IMR-90 (cell line): ENCODE measurements at regions of chr13 and their contacts with region 1.

Region 1: GRCh38 chr13:48709213-48709612 is 55.5 kb downstream of the CYSLTR2 start:
- DNase-seq: no peak
- ATAC-seq: no peak
- H3K4me3 ChIP-seq: no peak overlapping the region
- H3K27ac ChIP-seq: no peak overlapping the region
- H3K4me1 ChIP-seq: no peaks in the 10 kb centered on the region
- H3K27me3 ChIP-seq: peaks cover 7% of the 10 kb centered on the region
- CTCF ChIP-seq: no peak
- POLR2A ChIP-seq: no peak
- RAD21 ChIP-seq: no peak

Region 2: GRCh38 chr13:48741377-48741776 is 32.2 kb after region 1 on chr13:
- CTCF ChIA-PET with region 1: no interaction called
- POLR2A ChIA-PET with region 1: no interaction called
- dilution Hi-C with region 1: no loop called
- in situ Hi-C with region 1: no loop called
- intact Hi-C with region 1: loop called (anchors 5 kb)
- DNase-seq: peak; percentile 57
- ATAC-seq: no peak
- H3K4me3 ChIP-seq: no peak overlapping the region
- H3K27ac ChIP-seq: no peak overlapping the region
- H3K4me1 ChIP-seq: peaks cover 5% of the 10 kb centered on the region; the same call in 1 of the 2 replicates
- H3K27me3 ChIP-seq: no peaks in the 10 kb centered on the region
- CTCF ChIP-seq: no peak
- POLR2A ChIP-seq: no peak
- RAD21 ChIP-seq: no peak

Region 3: DNA sequence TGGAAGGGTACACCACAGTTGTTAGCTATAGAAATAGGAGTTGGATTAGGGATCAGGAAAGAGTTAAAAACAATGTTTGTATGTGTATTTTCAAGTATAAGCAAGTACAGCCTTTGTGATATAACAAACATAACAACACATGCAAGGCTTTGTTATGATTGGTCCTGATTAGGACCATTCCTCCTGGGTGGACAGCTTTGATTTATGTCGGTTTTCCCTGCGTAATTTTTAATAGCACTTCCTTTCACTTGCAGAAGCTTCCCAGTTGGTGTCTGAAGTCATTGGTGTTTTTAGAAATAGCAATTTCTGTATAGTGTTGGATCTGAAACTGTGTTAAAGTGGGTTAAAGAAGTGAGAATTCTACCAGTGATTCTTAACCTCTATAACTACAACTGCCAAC is 276.5 kb after region 1 on chr13:
- CTCF ChIA-PET with region 1: no interaction called
- POLR2A ChIA-PET with region 1: no interaction called
- dilution Hi-C with region 1: no loop called
- in situ Hi-C with region 1: no loop called
- intact Hi-C with region 1: no loop called
- DNase-seq: no peak
- ATAC-seq: no peak
- H3K4me3 ChIP-seq: no peak overlapping the region
- H3K27ac ChIP-seq: no peak overlapping the region
- H3K4me1 ChIP-seq: no peaks in the 10 kb centered on the region; the same call in 1 of the 2 replicates
- H3K27me3 ChIP-seq: no peaks in the 10 kb centered on the region
- CTCF ChIP-seq: no peak
- POLR2A ChIP-seq: no peak
- RAD21 ChIP-seq: no peak